Activated CD4-positive, alpha-beta T cell treated with anti-CD3 and anti-CD28 coated beads, Interleukin-2, amount 10 ng/mL, durations not matched to agents 24 days and 14 days (primary cell): ENCODE measurements at regions of chr10 and their contacts with region 1.

Region 1: GRCh38 chr10:133394064-133394663 is at the start of gene MTG1:
- DNase-seq: peak; percentile 99
- H3K4me3 Mint-ChIP-seq: peak within 1 kb of the TSS; percentile 97
- H3K27ac Mint-ChIP-seq: peak within 1 kb of the TSS; percentile 98
- H3K4me1 Mint-ChIP-seq: peaks cover 37% of the 10 kb centered on the region
- H3K27me3 Mint-ChIP-seq: no peaks in the 10 kb centered on the region
- total RNA-seq, gene MTG1: 66.8 and 68.1 TPM in 2 replicates

Region 2: DNA sequence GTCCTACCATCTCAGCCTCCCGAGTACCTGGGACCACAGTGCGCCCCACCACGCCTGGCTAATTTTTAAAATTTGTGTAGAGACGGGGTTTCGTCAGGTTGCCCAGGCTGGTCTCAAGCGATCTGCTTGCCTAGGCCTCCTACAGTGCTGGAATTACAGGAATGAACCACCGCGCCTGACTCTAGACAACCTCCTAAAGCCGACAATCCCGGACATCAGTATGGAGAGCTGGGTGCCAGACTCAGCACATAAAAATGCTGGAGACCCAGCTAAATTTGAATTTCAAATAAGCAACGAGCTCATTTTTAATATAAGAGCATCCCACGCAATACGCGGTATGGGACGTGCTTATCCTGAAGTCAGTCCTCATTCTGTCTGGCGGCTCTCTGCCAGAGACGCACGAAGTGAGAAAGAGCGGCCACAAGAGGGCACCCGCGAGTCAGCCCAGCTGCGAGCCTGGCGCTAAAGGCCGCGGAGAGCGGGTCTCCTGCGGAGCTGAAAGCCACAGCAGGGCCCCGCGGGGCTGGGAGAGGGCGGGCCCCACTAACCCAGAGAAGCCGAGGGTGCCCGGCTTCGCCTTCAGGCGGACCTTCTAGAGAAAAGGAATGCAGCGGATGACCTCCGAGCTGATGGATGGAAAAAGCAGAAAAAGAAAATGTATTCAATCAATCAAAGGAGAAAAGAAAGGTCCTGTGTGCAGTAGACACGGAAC is 64.5 kb before region 1 on chr10:
- intact Hi-C with region 1: loop called (anchors 5 kb)
- DNase-seq: peak; percentile 96
- H3K4me3 Mint-ChIP-seq: peak overlapping the region; percentile 64
- H3K27ac Mint-ChIP-seq: no peak overlapping the region
- H3K4me1 Mint-ChIP-seq: peaks cover 9% of the 10 kb centered on the region
- H3K27me3 Mint-ChIP-seq: peaks cover 66% of the 10 kb centered on the region

Region 3: DNA sequence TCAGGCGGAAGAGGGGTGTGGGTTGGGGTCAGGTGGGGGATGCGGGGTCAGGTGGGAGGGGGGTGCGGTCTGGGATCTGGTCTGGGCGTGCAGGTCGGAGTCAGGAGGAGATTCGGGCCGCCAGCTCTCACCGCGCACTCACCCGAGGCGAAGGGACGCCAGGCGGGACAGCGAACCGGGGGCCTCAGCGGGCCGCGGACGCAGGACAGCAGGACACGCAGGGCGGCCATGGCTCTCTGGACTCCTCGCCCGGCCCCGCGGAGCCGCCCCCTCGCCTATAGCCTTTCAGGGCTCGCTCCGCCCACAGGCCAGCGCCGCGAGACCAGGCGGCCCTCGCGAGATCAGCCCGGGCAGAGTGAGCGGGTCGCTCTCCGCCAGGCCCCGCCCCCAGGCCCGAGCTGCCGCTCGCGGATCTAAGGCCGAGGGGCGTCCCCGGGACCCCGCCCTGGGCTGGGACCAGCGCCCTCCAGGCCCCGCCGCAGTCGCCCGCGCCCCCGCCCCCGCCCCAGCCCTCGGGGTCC is 21.0 kb before region 1 on chr10 and contains the start of gene ECHS1:
- intact Hi-C with region 1: loop called (anchors 1 kb)
- DNase-seq: peak; percentile 99
- H3K4me3 Mint-ChIP-seq: peak within 1 kb of the TSS; percentile 94
- H3K27ac Mint-ChIP-seq: peak within 1 kb of the TSS; percentile 86
- H3K4me1 Mint-ChIP-seq: peaks cover 11% of the 10 kb centered on the region
- H3K27me3 Mint-ChIP-seq: peaks cover 3% of the 10 kb centered on the region
- total RNA-seq, gene ECHS1: 64.3 and 66.3 TPM in 2 replicates

Region 4: DNA sequence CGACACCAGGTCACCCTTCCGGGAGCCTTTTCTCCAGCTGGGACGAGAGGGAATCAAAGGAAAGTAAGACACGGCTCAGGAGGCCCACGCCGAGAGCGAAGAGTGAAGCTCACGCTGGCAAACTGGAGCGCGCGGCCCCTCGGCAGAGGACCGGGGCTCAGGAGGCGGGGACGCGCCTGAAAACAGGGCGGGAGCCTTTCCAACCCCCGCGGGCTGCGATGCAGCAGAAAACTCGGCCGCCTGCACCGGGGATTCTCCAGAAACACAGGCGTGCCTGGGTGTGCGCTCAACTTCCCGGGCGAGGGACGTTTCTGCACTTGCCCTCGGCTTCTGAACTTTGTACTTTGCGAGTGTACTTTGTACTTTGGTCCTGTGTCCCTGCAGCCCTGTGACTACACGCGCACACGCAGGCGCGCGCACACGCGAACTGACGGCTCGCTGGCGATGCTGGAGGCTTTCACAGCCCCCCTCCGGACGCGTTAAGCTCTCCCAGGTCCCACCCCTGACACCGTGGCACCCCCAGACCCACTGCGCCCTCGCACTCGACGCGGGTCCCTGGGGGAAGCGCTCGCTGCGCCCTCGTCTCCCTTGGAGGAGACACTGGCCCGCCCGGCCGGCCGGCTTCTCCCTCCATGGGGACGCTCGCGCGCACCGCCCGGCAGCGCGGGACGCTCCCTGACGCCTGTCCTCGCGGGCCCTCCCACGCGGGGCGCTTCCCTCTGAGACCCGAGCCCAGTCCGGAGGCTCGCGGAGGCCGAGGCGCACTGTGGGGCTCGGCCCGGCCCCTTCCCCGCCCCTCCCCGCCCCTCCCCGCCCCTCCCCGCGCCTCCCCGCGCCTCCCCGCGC is 15.7 kb before region 1 on chr10:
- intact Hi-C with region 1: loop called (anchors 1 kb)
- DNase-seq: peak; percentile 90
- H3K4me3 Mint-ChIP-seq: peak overlapping the region; percentile 80
- H3K27ac Mint-ChIP-seq: peak overlapping the region; percentile 51
- H3K4me1 Mint-ChIP-seq: peaks cover 7% of the 10 kb centered on the region
- H3K27me3 Mint-ChIP-seq: peaks cover 3% of the 10 kb centered on the region